ENCODE measurements at regions of chr13 and their contacts with region 1.

Region 1: DNA sequence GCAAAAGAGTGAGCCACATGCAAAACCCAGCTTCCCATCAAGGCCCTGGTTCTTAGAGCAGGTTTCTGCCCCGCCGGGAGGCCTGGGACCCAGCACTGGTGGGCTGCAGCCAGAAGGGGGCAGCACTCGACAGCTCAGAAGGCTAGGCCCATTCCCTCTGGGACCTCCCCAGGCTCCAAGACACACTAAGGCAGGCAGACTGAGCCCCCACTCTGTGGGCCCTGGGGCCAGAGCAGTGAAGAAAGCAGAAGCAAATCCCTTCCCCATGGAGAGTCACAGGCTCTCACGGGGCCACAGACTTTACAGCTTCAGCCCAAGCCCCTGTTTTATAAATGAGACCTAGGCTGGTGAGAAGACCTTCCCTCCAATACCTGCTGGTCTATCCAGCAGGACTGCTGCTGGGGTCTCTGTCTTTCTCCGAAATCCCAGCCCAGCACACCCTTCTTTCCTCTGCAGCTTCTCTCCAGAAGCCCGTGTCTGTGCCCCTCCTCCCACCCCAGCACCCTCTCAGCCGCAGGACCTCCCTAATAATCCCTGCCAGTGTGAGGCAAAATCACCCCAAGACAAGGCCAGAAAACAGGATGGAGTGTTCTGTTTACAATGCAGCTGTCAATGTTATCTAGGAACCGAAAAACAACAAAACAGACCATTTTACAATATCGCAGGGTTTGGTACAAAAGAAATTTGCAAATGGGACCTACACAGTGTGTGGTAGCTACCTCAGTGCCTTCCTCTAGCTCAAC is 109.3 kb downstream of the ABCC4 start:
- DNase-seq: peak; percentile 31 to 72
- ATAC-seq: peak; percentile 60 to 69
- H3K4me3 ChIP-seq: no peak overlapping the region
- H3K27ac ChIP-seq: peak overlapping the region; percentile 43 to 70 (median 60)
- H3K4me1 ChIP-seq: peaks cover 18 to 23% of the 10 kb centered on the region in 2 donors
- H3K27me3 ChIP-seq: no peaks in the 10 kb centered on the region
- CTCF ChIP-seq: peak; percentile 74 to 83 (median 80)
- POLR2A ChIP-seq: no peak

Region 2: GRCh38 chr13:95128045-95128643 is 63.8 kb before region 1 on chr13:
- in situ Hi-C with region 1: no loop called
- intact Hi-C with region 1: no loop called
- DNase-seq: no peak
- ATAC-seq: no peak
- H3K4me3 ChIP-seq: no peak overlapping the region
- H3K27ac ChIP-seq: no peak overlapping the region
- H3K4me1 ChIP-seq: no peaks in the 10 kb centered on the region
- H3K27me3 ChIP-seq: no peaks in the 10 kb centered on the region
- CTCF ChIP-seq: no peak
- POLR2A ChIP-seq: no peak

Region 3: GRCh38 chr13:95403828-95404522 is 212.0 kb after region 1 on chr13:
- in situ Hi-C with region 1: loop called (anchors 5 kb)
- intact Hi-C with region 1: loop called (anchors 1 kb)
- DNase-seq: peak; percentile 50 to 69
- ATAC-seq: peak; percentile 88 to 91
- H3K4me3 ChIP-seq: peak overlapping the region; percentile 22 to 60 (median 48)
- H3K27ac ChIP-seq: no peak overlapping the region
- H3K4me1 ChIP-seq: peaks cover 0 to 5% of the 10 kb centered on the region in 2 donors
- H3K27me3 ChIP-seq: no peaks in the 10 kb centered on the region
- CTCF ChIP-seq: peak; percentile 85 to 93 (median 92)
- POLR2A ChIP-seq: no peak